WTC11 (cell line): ENCODE measurements at regions of chr22 and their contacts with region 1.

Region 1: DNA sequence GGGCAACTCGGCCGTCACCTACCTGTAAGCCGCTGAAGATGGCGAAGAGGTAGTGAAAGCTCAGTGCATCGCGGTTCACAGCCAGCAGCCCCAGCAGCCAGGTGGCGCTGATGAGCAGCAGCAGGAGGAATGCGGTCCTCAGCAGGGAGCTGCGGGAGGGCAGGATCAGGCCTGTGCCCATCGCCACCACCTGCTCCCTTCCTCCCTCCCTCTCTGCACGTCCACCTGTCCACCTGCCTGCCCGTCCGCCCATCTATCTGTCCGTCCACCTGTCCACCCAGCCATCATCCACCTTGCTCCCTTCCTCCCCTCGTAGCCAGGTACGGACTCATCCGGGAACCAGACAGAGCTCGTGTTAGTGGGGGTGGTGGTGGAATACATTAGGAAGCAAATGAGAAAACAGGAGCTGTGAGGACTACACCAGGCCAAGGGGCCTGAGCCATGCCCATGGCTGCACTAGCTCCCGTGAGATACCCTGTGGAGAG is 32.2 kb downstream of the TRMU start:
- DNase-seq: peak; percentile 94
- ATAC-seq: peak; percentile 87
- H3K4me3 Mint-ChIP-seq: no peak overlapping the region
- H3K27ac Mint-ChIP-seq: no peak overlapping the region; the same call in 1 of the 2 replicates
- H3K4me1 Mint-ChIP-seq: peaks cover 6% of the 10 kb centered on the region; the same call in 1 of the 2 replicates
- H3K27me3 Mint-ChIP-seq: no peaks in the 10 kb centered on the region
- CTCF ChIP-seq: peak; percentile 85

Region 2: DNA sequence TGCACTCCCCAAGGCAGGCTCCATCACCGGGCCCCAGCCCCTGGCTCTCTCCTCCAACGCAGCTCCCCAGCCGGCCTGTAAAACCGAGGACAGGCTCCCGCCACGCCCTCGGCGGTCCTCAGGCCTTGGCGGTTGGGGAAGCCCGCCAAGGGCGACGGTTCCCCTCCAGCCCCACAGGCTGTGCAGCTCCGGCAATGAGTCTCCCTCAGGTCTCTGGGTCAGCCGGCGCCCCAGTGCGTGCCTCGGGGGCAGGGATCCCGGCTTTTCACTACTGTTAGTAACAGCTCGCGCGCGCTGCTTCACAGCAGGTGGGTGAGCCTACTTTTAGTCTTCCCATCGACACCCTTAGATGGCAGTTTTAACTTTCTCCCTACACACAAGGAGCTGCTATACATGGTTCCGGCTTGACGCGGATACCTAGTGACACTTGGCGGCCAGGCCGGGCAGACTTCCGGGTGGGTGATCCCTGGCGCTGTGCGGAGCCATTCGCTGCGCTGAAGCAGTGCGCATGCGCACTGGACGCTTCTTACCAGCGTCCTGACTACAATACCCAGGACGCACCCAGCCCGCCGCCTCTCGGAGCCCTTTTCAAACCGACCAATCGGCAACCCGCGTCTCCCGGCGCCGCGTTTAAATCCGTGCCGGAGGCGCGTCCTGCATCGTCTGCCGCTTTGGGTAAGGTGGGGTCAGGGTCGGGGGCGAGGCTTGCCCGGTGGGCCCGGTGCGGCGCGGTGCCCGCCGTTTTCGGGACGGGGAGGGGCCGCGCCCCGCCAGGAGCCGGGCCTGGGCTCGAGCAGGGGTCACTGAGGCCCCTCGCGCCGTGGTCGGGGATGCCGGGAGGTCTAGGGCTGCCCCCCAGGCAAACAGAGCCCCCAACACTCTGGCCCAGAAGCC is 71.2 kb before region 1 on chr22 and contains the start of gene GTSE1:
- CTCF ChIA-PET with region 1: interaction called, 12 read pairs
- POLR2A ChIA-PET with region 1: no interaction called
- DNase-seq: peak; percentile 98
- ATAC-seq: peak; percentile 97
- H3K4me3 Mint-ChIP-seq: peak within 1 kb of the TSS; percentile 92
- H3K27ac Mint-ChIP-seq: peak within 1 kb of the TSS; percentile 73
- H3K4me1 Mint-ChIP-seq: peaks cover 27% of the 10 kb centered on the region
- H3K27me3 Mint-ChIP-seq: no peaks in the 10 kb centered on the region; the same call in 1 of the 2 replicates
- CTCF ChIP-seq: no peak
- total RNA-seq, gene GTSE1: 45.4 to 56.1 TPM (median 45.4 TPM) in 3 replicates

Region 3: DNA sequence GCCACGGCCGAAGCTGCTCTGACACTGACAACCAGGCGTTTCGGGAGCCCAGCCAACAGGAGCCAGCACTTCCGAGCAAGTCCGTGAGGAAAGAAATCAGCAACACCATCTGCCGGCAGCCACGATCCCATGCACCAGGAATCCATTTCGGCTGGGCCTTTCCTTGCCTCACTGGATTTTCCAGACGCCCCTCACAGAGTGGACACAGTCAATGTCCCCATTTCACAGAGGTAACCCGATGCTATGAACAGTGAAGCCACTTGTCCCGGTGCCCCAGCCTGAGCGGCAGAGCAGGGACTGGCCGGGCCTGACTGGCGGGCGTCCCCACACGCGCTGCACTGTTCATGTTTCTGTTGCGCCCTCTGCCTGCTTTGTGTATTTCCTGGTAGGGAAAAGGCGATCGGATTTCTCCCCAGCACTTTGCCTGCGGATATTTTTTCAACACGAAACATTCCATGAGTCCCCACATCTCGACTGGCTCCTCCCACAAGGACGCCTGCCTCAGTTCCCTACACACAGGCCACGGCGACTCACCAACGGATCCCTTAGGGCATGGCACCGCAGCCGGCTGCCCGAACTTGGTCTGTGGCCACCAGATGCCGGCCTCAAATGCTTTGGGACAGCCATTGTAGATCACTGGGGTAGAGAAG is 23.0 kb after region 1 on chr22:
- CTCF ChIA-PET with region 1: interaction called, 17 read pairs
- POLR2A ChIA-PET with region 1: no interaction called
- DNase-seq: no peak
- ATAC-seq: peak; percentile 65
- H3K4me3 Mint-ChIP-seq: no peak overlapping the region
- H3K27ac Mint-ChIP-seq: peak overlapping the region; percentile 57
- H3K4me1 Mint-ChIP-seq: 0 out of 2 replicates have a peak, but pooled peaks cover 3% of the 10 kb centered on the region
- H3K27me3 Mint-ChIP-seq: no peaks in the 10 kb centered on the region
- CTCF ChIP-seq: no peak

Region 4: GRCh38 chr22:46444390-46444854 is 76.7 kb after region 1 on chr22:
- CTCF ChIA-PET with region 1: interaction called, 21 read pairs
- POLR2A ChIA-PET with region 1: no interaction called
- DNase-seq: no peak
- ATAC-seq: peak; percentile 56
- H3K4me3 Mint-ChIP-seq: no peak overlapping the region
- H3K27ac Mint-ChIP-seq: peak overlapping the region; percentile 91
- H3K4me1 Mint-ChIP-seq: peaks cover 21% of the 10 kb centered on the region
- H3K27me3 Mint-ChIP-seq: no peaks in the 10 kb centered on the region
- CTCF ChIP-seq: no peak

Region 5: GRCh38 chr22:46501701-46502100 is 134.0 kb after region 1 on chr22:
- CTCF ChIA-PET with region 1: interaction called, 11 read pairs
- POLR2A ChIA-PET with region 1: no interaction called
- DNase-seq: no peak
- ATAC-seq: no peak
- H3K4me3 Mint-ChIP-seq: no peak overlapping the region
- H3K27ac Mint-ChIP-seq: 0 out of 2 replicates have a peak overlapping the region, but pooled peaks have one; percentile 19
- H3K4me1 Mint-ChIP-seq: peaks cover 23% of the 10 kb centered on the region
- H3K27me3 Mint-ChIP-seq: no peaks in the 10 kb centered on the region
- CTCF ChIP-seq: no peak

Region 6: GRCh38 chr22:46542011-46542985 is 174.5 kb after region 1 on chr22:
- CTCF ChIA-PET with region 1: interaction called, 156 read pairs
- POLR2A ChIA-PET with region 1: interaction called, 3 read pairs
- DNase-seq: peak; percentile 90
- ATAC-seq: peak; percentile 96
- H3K4me3 Mint-ChIP-seq: no peak overlapping the region
- H3K27ac Mint-ChIP-seq: no peak overlapping the region
- H3K4me1 Mint-ChIP-seq: peaks cover 5% of the 10 kb centered on the region
- H3K27me3 Mint-ChIP-seq: peaks cover 38% of the 10 kb centered on the region
- CTCF ChIP-seq: peak; percentile 89